H1 (cell line): ENCODE measurements at regions of chr17 and their contacts with region 1.

Region 1: GRCh38 chr17:75261336-75262111 is at the starts of genes GGA3 and MRPS7:
- DNase-seq: peak in 1 of 2 experiments; percentile 96
- H3K4me3 ChIP-seq: peak within 1 kb of the TSS; percentile 89 to 99 (median 94)
- H3K27ac ChIP-seq: peak within 1 kb of the TSS; percentile 99
- H3K4me1 ChIP-seq: peaks cover 0 to 6% (median 3%) of the 10 kb centered on the region in 4 experiments; a peak in 4 of 7 replicates
- H3K27me3 ChIP-seq: no peaks in the 10 kb centered on the region
- CTCF ChIP-seq: no peak
- EP300 ChIP-seq: no peak
- POLR2A ChIP-seq: peak; percentile 85 to 92
- RAD21 ChIP-seq: no peak
- total RNA-seq, gene GGA3: 54.2 and 60.0 TPM in 2 replicates
- total RNA-seq, gene MRPS7: 75.5 and 79.4 TPM in 2 replicates

Region 2: DNA sequence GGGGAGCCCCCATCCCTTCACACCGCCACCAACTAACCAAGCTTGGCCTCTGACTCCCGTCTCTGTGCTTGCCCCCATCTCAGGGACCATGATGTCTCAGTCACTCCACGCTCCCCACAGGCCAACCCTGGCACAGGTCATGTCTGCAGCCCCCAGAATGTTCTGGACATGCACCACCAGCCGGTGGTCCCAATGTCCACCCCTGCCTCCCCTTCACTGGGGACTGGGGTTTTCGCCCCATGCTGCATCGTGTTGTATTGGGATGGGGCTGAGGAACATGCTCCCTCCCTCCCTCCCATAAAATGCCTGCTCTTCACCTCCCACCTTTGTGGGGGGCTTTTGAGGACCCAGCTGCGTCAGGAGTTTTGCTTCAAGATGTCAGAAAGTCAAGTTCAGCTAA is 256.6 kb before region 1 on chr17:
- CTCF ChIA-PET with region 1: no interaction called
- POLR2A ChIA-PET with region 1: no interaction called
- DNase-seq: no peak
- H3K4me3 ChIP-seq: no peak overlapping the region
- H3K27ac ChIP-seq: no peak overlapping the region
- H3K4me1 ChIP-seq: no peaks in the 10 kb centered on the region
- H3K27me3 ChIP-seq: no peaks in the 10 kb centered on the region
- CTCF ChIP-seq: no peak
- EP300 ChIP-seq: no peak
- POLR2A ChIP-seq: no peak
- RAD21 ChIP-seq: no peak

Region 3: DNA sequence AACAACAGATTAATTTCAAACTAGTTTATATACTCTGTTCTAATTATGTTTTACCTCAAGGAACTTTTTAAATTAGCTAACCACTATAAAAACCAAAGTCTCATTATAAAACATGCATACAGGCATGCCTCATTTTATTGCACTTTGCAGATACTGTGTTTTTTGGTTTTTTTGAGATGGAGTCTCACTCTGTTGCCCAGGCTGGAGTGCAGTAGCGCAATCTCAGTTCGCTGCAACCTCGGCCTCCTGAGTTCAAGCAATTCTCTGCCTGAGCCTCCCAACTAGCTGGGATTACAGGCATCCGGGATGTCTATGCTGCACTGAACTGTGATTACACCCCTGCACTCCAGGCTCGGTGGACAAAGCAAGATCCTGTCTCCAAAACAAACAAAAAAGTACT is 98.5 kb before region 1 on chr17:
- CTCF ChIA-PET with region 1: no interaction called
- POLR2A ChIA-PET with region 1: no interaction called
- DNase-seq: no peak
- H3K4me3 ChIP-seq: no peak overlapping the region
- H3K27ac ChIP-seq: no peak overlapping the region
- H3K4me1 ChIP-seq: no peaks in the 10 kb centered on the region
- H3K27me3 ChIP-seq: no peaks in the 10 kb centered on the region
- CTCF ChIP-seq: no peak
- EP300 ChIP-seq: no peak
- POLR2A ChIP-seq: no peak
- RAD21 ChIP-seq: no peak

Region 4: DNA sequence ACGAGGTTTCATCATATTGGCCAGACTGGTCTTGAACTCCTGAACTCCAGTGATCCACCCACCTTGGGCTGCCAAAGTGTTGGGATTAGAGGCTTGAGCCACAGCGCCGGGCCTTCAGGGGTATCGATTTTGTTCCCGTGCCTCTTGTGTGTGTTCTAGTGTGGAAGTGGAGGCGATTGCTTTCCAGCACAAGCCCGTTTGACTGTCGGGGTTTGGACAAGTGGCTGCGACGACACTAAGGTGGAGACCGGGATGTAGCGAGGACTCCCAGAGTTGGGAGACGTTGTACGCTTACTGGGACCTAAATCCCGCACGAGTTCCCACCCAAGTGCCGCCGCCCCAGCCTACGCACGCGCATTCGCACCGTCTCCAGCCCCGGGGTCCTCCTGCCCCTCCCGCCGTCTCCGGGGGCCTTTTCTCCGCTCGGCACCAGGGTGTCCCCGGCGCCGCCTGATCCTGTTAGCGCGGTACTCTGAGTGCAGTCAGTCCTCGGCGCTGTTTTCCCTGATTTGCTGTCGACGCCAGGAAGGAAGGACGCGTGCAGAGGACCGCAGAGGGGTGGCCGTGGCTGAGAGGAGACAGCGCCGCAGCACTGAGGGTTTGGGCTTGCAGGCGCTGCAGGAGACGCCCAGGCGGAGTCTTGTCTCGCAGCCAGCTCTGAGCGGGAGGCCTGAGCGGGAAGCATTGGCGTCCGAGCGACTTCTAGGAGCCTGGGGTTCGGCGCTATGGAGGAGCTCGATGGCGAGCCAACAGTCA is 56.3 kb before region 1 on chr17 and contains the start of gene NUP85:
- CTCF ChIA-PET with region 1: interaction called, 9 read pairs
- POLR2A ChIA-PET with region 1: interaction called, 13 read pairs
- DNase-seq: peak; percentile 73 to 96
- H3K4me3 ChIP-seq: peak within 1 kb of the TSS; percentile 76 to 98 (median 92)
- H3K27ac ChIP-seq: peak within 1 kb of the TSS; percentile 99
- H3K4me1 ChIP-seq: peaks cover 0 to 2% (median 0%) of the 10 kb centered on the region in 4 experiments; a peak in 2 of 7 replicates
- H3K27me3 ChIP-seq: no peaks in the 10 kb centered on the region
- CTCF ChIP-seq: no peak
- EP300 ChIP-seq: no peak
- POLR2A ChIP-seq: peak in 1 of 2 experiments; percentile 79; a peak in 2 of 3 replicates
- RAD21 ChIP-seq: no peak
- total RNA-seq, gene NUP85: 97.4 and 98.5 TPM in 2 replicates

Region 5: DNA sequence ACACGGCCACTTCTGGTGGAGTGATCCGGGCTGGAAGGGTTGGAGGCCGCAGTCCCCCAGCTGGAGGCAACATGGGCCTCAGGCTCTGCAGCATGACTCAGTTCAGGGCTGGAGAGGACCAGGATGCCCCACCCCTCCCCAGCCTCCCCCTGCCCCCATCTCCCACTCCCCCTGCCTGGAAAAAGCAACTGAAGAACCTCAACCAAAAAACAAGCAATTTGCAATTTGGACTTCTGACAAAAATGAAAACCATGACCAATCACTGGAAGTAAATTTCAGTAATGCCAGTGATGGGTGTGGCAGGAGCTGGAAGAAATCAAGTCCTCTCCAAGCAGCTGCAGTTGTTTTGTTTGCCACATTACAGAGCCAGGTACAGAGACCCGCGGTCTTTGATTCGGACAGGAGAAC is 16.1 kb after region 1 on chr17:
- CTCF ChIA-PET with region 1: interaction called, 79 read pairs
- POLR2A ChIA-PET with region 1: interaction called, 62 read pairs
- DNase-seq: no peak
- H3K4me3 ChIP-seq: no peak overlapping the region
- H3K27ac ChIP-seq: no peak overlapping the region
- H3K4me1 ChIP-seq: no peaks in the 10 kb centered on the region
- H3K27me3 ChIP-seq: no peaks in the 10 kb centered on the region
- CTCF ChIP-seq: no peak
- EP300 ChIP-seq: no peak
- POLR2A ChIP-seq: no peak
- RAD21 ChIP-seq: no peak

Region 6: GRCh38 chr17:75405365-75406221 is 144.1 kb after region 1 on chr17 and contains the start of gene GRB2:
- CTCF ChIA-PET with region 1: interaction called, 4 read pairs
- POLR2A ChIA-PET with region 1: interaction called, 11 read pairs
- DNase-seq: peak; percentile 84 to 100
- H3K4me3 ChIP-seq: peak within 1 kb of the TSS; percentile 90 to 94 (median 92)
- H3K27ac ChIP-seq: no peak within 1 kb of the TSS
- H3K4me1 ChIP-seq: no peaks in the 10 kb centered on the region
- H3K27me3 ChIP-seq: no peaks in the 10 kb centered on the region
- CTCF ChIP-seq: no peak
- EP300 ChIP-seq: no peak
- POLR2A ChIP-seq: peak in 1 of 2 experiments; percentile 73; a peak in 2 of 3 replicates
- RAD21 ChIP-seq: no peak
- total RNA-seq, gene GRB2: 101 and 102 TPM in 2 replicates